ENCODE measurements at regions of chr20 and their contacts with region 1.

Region 1: GRCh38 chr20:11484479-11484878 is 433.2 kb upstream of the BTBD3 start:
- DNase-seq: no peak
- ATAC-seq: peak; percentile 82
- H3K4me3 ChIP-seq: no peak overlapping the region
- H3K27ac ChIP-seq: no peak overlapping the region
- H3K4me1 ChIP-seq: no peaks in the 10 kb centered on the region
- H3K27me3 ChIP-seq: no peaks in the 10 kb centered on the region
- CTCF ChIP-seq: no peak
- EP300 ChIP-seq: no peak
- POLR2A ChIP-seq: no peak
- RAD21 ChIP-seq: no peak

Region 2: GRCh38 chr20:11287126-11287525 is 197.4 kb before region 1 on chr20:
- CTCF ChIA-PET with region 1: no interaction called
- POLR2A ChIA-PET with region 1: no interaction called
- RAD21 ChIA-PET with region 1: no interaction called
- SMC1A ChIA-PET with region 1: no interaction called
- in situ Hi-C with region 1: no loop called
- intact Hi-C with region 1: no loop called
- DNase-seq: no peak
- ATAC-seq: no peak
- H3K4me3 ChIP-seq: no peak overlapping the region
- H3K27ac ChIP-seq: no peak overlapping the region
- H3K4me1 ChIP-seq: no peaks in the 10 kb centered on the region
- H3K27me3 ChIP-seq: no peaks in the 10 kb centered on the region
- CTCF ChIP-seq: no peak
- EP300 ChIP-seq: no peak
- POLR2A ChIP-seq: no peak
- RAD21 ChIP-seq: no peak

Region 3: DNA sequence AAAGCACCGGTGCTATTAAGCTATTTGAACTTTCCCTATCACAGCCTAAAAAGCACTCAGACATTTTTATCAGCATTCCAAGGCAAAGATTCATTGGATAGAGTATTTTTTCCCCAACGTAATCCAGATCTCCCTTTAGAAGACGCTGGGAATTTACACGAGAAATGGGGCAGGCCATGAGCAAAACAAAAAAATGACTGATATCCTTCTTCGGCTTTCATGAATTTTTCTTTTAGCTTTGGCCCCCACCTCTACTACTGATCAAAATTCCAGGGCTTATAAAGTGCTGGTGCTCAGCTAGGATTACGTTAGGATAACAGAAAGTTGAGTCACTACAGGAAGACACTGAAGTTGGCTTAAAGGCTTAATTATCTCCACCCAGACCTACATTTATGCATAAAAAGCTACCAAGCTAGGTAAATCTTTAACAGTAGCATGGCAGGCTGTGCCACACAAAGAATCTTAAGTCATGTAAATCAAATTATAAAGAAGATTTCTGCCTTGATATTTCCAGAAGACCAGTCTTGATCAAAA is 14.7 kb after region 1 on chr20:
- CTCF ChIA-PET with region 1: interaction called, 7 read pairs
- POLR2A ChIA-PET with region 1: interaction called, 4 read pairs
- RAD21 ChIA-PET with region 1: no interaction called
- SMC1A ChIA-PET with region 1: interaction called, 10 read pairs
- in situ Hi-C with region 1: no loop called
- intact Hi-C with region 1: no loop called
- DNase-seq: no peak
- ATAC-seq: no peak
- H3K4me3 ChIP-seq: no peak overlapping the region
- H3K27ac ChIP-seq: no peak overlapping the region
- H3K4me1 ChIP-seq: no peaks in the 10 kb centered on the region
- H3K27me3 ChIP-seq: no peaks in the 10 kb centered on the region
- CTCF ChIP-seq: no peak
- EP300 ChIP-seq: no peak
- POLR2A ChIP-seq: no peak
- RAD21 ChIP-seq: no peak

Region 4: DNA sequence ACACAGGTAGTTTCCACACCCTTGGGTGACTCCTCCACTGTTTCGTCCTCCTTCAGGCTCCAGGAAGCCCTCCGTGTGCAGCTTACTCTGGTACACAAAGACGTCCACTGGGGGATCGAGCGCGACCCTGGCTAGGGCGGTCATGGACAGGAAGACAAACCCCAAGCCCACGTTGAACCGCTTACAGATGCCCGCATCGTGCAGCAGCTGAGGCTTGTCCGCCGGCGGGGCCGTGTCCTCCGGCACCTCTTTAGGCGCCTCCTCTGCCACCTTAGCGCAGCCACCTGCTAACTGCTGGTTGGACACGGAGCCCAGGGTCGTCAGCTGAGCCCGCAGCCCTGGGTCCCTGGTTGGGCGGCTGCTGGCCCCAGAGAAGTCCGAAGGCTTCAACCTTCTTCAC is 124.3 kb after region 1 on chr20:
- CTCF ChIA-PET with region 1: no interaction called
- POLR2A ChIA-PET with region 1: no interaction called
- RAD21 ChIA-PET with region 1: no interaction called
- SMC1A ChIA-PET with region 1: no interaction called
- in situ Hi-C with region 1: no loop called
- intact Hi-C with region 1: no loop called
- DNase-seq: no peak
- ATAC-seq: no peak
- H3K4me3 ChIP-seq: no peak overlapping the region
- H3K27ac ChIP-seq: no peak overlapping the region
- H3K4me1 ChIP-seq: no peaks in the 10 kb centered on the region
- H3K27me3 ChIP-seq: no peaks in the 10 kb centered on the region
- CTCF ChIP-seq: no peak
- EP300 ChIP-seq: no peak
- POLR2A ChIP-seq: no peak
- RAD21 ChIP-seq: no peak